Right ventricle myocardium superior (tissue), 1 donor: ENCODE measurements at regions of chr14 and their contacts with region 1.

Region 1: DNA sequence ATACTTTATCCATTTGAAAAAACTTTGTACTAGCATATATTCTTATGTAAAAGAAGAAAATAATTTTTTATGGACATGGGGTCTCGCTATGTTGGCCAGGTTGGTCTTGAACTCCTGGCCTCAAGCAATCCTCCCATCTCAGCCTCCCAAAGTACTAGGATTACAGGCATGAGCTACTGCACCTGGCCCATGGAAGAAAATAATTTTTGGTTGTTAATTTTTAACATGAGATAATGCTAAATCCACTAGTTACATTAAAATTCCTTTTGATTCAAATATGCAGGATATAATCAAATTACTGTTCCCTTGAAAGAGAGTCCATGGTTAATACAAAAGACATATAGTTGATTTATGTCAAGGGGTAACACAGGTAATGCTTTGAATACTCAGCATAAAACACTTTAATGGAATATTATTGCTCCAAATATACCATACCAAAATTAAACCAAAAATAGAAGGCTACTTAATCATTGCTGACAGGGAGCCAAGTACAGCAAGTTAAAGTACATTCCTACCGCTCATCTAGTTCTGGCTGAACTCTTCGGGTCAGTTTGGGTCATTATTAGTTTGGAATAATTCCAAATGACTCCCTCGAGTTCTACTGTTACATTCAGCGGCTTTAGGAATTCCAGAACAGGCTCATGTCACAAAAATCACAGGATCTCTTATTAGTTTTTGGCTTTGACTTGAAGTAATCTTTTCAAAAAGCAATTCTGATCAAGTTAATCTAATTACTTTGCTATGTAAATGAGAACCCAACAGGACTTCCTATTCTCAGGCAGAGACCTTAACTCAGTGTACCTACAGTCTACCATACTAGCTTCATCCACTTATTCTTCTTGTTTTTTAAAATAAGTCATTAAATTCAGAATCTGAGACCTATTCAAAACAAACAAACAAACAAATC is 6.1 kb downstream of the SOS2 start:
- DNase-seq: no peak
- ATAC-seq: peak; percentile 91

Region 2: DNA sequence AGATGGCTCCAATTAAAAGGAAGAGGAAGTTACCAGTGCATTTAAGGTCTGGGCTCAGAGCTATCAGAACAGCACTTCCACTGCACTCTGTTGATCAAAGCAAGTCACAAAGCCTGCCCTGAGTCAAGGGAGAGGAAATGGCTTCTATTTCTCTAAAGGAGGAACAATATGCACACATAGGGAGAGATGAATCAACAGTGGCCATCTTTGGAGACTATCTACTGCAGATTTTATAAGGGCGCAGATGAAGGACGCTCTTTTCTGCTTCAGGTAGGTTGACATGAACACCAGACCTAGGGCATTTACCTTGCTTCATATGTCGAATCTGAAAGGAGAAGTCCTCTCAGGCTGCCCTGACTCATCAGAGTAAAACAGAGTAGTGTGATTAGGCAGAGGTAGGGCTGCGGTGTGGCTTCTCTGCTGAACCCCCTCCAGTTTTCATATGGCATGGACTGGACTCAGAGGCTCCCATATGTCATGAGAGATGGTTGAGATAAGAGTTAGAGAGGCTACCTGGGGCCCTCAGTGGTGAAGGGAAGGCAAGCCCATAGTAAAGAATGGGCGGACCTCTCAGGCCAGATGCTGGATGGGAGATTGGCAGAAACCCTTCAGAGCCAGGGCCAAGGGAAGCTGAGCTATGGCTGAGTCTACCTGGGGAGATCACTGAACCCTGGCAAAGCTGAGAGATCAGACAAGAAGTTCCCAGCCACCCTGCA is 248.0 kb before region 1 on chr14:
- intact Hi-C with region 1: no loop called
- DNase-seq: no peak
- ATAC-seq: peak; percentile 40

Region 3: DNA sequence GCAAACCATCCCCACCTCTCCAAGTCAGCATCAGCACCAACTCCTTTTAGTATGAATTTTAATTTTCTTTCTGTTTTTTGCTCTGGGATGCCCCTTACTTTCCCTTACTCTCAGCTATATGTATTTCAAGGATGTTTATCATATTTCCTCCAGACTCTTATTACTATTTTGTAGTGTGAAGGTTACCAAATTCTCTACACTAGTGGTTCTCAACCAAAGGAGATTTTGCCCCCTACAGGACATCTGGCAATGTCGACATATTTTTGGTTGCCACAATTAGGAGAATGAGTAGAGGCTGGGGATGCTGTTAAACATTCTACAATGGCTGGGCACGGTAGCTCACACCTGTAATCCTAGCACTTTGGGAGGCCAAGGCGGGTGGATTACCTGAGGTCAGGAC is 35.2 kb after region 1 on chr14:
- intact Hi-C with region 1: no loop called
- DNase-seq: no peak
- ATAC-seq: peak; percentile 43

Region 4: GRCh38 chr14:50667996-50668825 is 442.9 kb after region 1 on chr14 and contains the start of gene SAV1:
- intact Hi-C with region 1: loop called (anchors 10 kb)
- DNase-seq: peak; percentile 91
- ATAC-seq: peak; percentile 97
- total RNA-seq, gene SAV1: 22.6 TPM